Calu3 (cell line): ENCODE measurements at regions of chr5 and their contacts with region 1.

Region 1: GRCh38 chr5:32232441-32233219 is 58.5 kb upstream of the GOLPH3 start:
- DNase-seq: peak; percentile 86
- H3K4me3 Mint-ChIP-seq: peak overlapping the region; percentile 43
- H3K27ac Mint-ChIP-seq: peak overlapping the region; percentile 79
- H3K4me1 Mint-ChIP-seq: peaks cover 40% of the 10 kb centered on the region
- H3K27me3 Mint-ChIP-seq: no peaks in the 10 kb centered on the region
- CTCF ChIP-seq: peak; percentile 74

Region 2: DNA sequence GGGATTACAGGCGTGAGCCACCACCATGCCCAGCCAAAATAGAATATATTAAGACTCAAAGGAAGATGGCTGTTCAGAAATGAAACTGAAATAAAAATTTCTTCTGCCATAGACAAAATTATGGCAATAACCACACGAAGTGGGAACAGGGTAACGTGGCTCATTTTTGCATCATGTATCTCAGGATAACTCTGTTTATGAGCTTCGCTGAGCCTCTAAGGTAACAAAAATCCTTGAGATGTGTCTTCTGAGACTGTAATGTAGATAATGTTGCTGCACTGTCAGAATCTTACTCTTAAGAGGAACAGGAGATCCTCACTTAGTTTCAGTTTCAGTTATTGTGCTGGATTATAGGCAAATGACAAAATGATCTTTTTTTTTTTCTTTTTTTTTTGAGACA is 212.4 kb before region 1 on chr5:
- CTCF ChIA-PET with region 1: no interaction called
- intact Hi-C with region 1: no loop called
- DNase-seq: no peak
- H3K4me3 Mint-ChIP-seq: no peak overlapping the region
- H3K27ac Mint-ChIP-seq: no peak overlapping the region
- H3K4me1 Mint-ChIP-seq: no peaks in the 10 kb centered on the region
- H3K27me3 Mint-ChIP-seq: peaks cover 39% of the 10 kb centered on the region
- CTCF ChIP-seq: no peak

Region 3: DNA sequence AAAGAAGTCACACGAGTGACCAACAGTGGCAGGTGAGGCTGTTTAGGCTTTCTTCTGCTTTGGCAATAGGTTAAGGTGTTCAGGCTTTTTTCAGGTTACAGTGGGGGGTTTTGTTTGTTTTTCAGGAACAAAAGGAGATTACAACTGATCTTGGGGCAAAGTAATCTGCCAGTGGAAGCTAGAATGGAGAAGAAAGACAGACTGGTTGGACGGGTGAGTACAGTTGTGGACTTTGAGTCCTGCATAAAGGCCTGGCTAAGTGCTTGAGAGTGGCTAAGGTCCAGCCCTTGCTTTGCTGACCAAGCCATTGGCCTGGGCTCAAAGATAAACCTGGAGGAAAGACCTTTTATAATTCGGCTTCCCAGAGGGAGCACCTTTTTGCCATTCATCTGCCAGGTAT is 17.0 kb after region 1 on chr5:
- CTCF ChIA-PET with region 1: no interaction called
- intact Hi-C with region 1: loop called (anchors 2 kb)
- DNase-seq: peak; percentile 22
- H3K4me3 Mint-ChIP-seq: no peak overlapping the region
- H3K27ac Mint-ChIP-seq: peak overlapping the region; percentile 34
- H3K4me1 Mint-ChIP-seq: peaks cover 19% of the 10 kb centered on the region
- H3K27me3 Mint-ChIP-seq: no peaks in the 10 kb centered on the region
- CTCF ChIP-seq: no peak

Region 4: GRCh38 chr5:32302835-32303754 is 70.5 kb after region 1 on chr5:
- CTCF ChIA-PET with region 1: no interaction called
- intact Hi-C with region 1: loop called (anchors 2 kb)
- DNase-seq: peak; percentile 34
- H3K4me3 Mint-ChIP-seq: peak overlapping the region; percentile 52
- H3K27ac Mint-ChIP-seq: peak overlapping the region; percentile 91
- H3K4me1 Mint-ChIP-seq: peaks cover 73% of the 10 kb centered on the region
- H3K27me3 Mint-ChIP-seq: no peaks in the 10 kb centered on the region
- CTCF ChIP-seq: no peak

Region 5: DNA sequence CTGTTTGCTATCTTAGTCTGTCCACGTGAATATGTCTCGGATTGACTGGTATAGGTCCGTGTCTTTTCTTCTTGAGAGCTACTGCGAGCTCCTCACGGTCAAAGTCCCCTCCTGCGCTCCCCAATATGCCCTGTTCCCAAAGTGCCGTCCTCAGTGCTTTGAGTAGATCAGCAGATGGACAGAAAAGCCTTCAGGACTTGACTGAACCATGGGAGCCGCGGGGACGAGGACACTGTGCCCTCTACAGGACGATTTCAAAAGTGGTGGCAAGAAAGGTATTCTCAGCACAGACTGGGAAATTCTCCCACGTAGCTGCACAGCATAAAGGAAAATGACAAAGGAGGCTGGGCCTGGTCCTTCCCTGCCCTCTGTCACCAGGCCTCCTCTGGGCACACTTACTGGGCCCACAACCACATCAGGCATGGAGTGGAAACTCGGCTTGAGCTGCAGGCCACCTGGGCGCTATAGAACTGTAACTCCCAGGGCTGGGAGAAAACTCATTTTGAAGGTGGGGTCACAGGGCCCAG is 96.7 kb after region 1 on chr5:
- CTCF ChIA-PET with region 1: interaction called, 48 read pairs
- intact Hi-C with region 1: loop called (anchors 1 kb)
- DNase-seq: peak; percentile 76
- H3K4me3 Mint-ChIP-seq: no peak overlapping the region
- H3K27ac Mint-ChIP-seq: peak overlapping the region; percentile 44
- H3K4me1 Mint-ChIP-seq: peaks cover 53% of the 10 kb centered on the region
- H3K27me3 Mint-ChIP-seq: no peaks in the 10 kb centered on the region
- CTCF ChIP-seq: peak; percentile 50

Region 6: DNA sequence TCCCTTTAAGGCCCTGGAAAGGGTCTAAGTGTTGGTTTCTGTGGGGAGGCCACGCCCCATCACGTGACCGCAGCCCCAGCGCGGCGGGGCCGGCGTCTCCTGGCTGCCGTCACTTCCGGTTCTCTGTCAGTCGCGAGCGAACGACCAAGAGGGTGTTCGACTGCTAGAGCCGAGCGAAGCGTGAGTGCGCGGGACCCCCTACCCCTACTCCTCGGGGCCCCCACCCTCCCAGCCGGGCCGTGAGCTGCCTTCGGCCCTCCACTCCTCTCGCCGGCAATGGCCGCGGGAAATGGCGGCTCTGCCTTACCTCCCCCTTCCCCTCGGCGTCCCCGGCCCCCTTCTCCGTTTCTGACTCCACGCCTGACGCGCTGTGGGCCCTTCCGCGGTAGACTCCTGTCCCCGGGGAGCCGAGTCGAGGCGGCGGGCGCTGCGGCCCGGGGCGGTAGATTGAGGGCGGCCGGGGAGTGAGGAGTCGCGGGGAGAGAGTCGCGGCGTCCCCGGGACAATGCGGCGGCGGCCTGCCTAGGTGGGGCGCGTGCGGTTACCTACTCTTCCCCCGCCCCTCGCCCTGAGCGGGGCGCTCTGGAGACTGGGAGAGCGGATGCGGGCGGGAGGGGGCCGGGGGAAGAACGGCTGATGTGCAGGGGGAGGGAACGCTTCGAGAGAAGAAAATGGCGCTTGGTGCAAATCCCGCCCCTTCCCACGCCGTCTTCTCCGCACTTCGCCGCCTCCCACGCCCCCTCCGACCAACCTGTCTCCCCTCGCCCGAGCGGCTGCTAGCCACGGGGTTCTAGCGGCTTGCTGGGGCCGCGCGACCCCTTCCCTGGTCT is 353.0 kb after region 1 on chr5 and contains the start of gene SUB1:
- CTCF ChIA-PET with region 1: interaction called, 5 read pairs
- intact Hi-C with region 1: loop called (anchors 10 kb)
- DNase-seq: peak; percentile 94
- H3K4me3 Mint-ChIP-seq: peak within 1 kb of the TSS; percentile 96
- H3K27ac Mint-ChIP-seq: peak within 1 kb of the TSS; percentile 97
- H3K4me1 Mint-ChIP-seq: peaks cover 42% of the 10 kb centered on the region
- H3K27me3 Mint-ChIP-seq: no peaks in the 10 kb centered on the region
- CTCF ChIP-seq: no peak
- total RNA-seq, gene SUB1: 312 and 334 TPM in 2 replicates